GM10248 (cell line): ENCODE measurements at regions of chr3 and their contacts with region 1.

Region 1: DNA sequence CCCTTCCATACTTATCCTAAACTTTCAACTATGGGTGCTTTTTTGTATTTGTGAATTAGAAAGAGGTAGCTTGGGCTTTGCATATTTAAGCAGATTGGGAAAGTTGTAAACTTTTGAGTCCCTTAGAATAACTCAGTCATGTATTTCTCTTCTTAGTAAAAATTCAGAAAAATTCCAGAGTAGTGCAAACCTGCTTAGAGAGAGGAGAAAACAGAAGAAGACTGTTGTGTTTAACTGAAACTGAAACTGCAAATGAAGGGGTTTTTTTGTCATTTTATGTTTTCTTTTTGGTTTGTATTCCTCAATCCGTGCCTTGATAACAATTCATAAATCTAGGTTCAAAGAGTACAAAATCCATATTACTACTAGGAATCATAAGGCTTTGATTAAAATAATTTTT is 31.3 kb downstream of the CD200 start:
- DNase-seq: peak; percentile 25
- CTCF ChIP-seq: no peak

Region 2: DNA sequence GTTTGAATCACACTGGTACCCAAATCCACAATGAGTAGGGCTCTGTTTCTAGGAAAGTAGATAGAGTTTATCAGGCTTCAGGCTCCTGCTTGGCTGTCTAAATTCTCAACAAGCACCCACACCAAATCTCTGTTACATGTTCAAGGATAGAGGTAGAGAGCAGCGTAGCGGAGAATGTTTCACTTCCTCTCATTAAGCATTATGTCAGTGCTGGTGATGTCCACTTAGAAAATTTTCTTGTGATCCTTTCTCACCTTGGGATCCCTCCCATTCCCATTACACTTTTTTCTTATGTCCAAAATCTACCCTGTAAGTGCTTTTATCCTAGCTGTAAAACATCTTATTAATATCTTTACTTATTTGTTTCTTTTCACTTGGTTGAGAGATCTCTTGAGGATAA is 196.5 kb before region 1 on chr3:
- CTCF ChIA-PET with region 1: no interaction called
- POLR2A ChIA-PET with region 1: no interaction called
- DNase-seq: peak; percentile 52
- CTCF ChIP-seq: no peak

Region 3: DNA sequence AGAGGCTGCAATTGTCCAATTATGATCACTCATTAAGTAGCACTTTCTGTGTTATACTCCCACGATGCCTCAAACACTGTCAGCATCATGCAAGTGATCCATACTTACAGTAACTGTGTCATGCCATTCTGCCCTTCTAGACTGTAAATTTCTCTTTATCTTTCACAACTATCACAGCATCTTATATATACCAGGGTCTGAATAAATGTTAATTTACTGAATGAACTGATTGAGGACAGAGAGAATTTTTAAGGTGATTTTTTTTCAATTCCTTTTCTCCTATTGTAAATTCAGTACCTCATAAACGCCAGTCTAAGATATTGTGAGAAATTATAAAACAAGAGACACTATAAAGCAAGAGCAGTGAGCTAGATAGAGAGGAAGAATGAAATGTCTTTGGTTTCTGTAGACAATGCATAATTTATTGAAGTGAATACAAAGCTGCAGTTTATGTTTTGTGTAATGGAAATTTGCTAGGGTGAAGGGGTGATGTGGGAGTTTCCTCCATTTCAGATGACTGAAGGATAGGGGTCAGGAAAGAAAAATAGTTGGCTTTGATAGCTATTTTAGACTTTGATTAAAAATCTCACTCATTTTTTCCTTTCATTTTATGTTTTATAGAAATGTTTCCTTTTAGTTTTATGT is 14.0 kb before region 1 on chr3:
- CTCF ChIA-PET with region 1: interaction called, 44 read pairs
- POLR2A ChIA-PET with region 1: no interaction called
- DNase-seq: no peak
- CTCF ChIP-seq: no peak

Region 4: GRCh38 chr3:112376996-112377395 is 12.7 kb after region 1 on chr3:
- CTCF ChIA-PET with region 1: interaction called, 19 read pairs
- POLR2A ChIA-PET with region 1: no interaction called
- DNase-seq: no peak
- CTCF ChIP-seq: no peak

Region 5: DNA sequence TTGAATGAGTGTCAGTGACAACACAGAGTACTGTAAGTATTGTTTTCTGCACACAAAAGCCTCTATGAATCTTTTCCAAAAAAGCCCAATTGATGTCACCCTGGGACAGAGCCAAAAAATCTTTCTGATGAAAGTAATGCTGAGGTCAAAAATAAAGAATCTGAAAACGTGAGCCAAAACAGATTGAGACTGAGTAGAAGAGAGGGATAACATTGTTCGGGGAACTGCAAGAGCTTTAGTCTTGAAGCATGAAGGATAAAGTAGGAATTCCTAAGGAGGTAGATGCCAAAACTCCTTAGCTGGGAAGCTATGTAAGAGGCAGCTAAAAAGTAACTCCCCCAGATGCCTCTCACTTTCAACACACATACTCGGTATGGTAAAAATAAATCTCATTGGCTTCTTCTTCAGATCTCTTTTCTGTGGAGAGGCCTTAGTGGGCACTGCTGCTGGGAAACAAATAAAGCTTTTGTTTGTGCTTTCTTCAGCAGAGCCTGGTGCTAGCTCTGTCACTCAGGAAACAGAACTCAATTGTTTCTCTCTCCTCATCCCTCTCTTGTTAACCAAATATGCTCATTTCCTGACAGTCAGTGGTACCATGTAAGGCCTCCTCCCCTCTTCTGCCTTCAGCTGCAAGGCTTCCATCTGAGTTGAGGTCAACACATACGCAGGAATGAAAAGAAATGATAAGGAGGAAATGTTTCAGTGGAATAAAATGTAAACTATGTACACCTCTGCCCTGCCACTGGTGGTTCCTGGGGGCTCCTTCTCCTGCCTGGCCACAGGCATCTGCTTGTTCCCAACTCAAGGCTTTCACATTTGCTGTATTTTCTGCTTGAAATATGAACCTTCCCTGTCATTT is 26.7 kb after region 1 on chr3:
- CTCF ChIA-PET with region 1: no interaction called
- POLR2A ChIA-PET with region 1: no interaction called
- DNase-seq: no peak
- CTCF ChIP-seq: no peak